Right ventricle myocardium superior (tissue), 1 donor: ENCODE measurements at regions of chr7 and their contacts with region 1.

Region 1: DNA sequence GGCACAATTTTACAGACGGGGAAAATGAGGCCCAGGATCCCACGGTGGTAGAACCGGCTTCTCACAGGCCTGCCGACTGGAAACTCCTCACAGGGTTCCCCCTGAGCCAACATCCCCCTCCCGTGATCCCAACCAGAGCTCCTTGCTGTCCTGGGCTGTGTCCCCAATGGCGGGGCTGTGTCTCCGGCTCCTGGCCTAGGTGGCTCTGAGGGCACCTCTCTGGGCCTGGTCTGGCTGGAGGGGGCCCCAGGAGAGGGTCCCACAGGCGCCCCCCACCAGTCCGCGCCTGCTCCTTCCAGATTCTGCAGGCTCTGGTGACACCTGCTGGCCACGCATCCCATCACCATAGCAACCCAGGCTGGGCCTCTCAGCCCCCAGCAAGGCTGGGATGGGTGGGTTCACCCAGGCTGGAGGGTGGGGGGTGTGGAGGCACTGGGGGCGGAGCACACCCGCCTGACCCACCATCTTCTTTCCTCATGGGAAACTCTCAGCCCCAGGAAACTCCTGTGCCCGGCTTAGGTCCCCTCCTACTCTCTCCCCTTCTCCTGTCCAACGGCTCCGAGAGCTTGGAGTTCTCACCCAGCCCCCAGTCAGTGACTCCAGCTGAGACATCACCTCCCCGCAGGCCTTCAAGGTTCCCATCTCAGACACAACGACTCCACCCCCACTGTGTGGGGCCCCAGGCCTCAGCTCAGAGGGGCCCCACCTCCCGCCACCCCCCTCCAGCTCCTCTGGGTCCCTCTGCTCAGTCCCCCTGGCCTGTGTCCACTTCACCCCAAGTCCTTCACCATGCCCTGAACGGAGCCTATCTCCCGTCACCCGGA is 27.1 kb upstream of the TNRC18 start:
- DNase-seq: peak; percentile 75
- ATAC-seq: peak; percentile 87

Region 2: DNA sequence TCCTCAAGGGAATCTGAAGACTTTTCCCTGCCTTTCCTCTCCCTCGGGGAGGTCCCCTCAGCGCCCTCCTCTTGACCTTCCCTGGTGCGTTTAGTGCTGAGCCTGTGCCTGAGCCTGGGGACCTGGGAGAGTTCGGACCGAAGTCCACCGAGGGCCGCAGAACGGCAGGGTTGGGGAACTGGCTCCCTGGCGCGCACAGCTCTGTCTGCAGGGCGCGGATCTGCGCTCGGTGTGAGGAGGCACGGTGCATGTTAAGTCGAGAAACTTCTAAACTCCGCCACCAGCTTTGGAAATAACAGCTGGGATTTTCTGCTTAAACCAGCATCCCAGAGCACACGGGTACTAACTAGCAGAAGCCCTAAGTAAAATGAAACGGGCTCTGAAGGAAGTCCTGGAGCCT is 212.3 kb before region 1 on chr7:
- intact Hi-C with region 1: loop called (anchors 2 kb)
- DNase-seq: no peak
- ATAC-seq: no peak

Region 3: GRCh38 chr7:5367661-5368060 is 83.1 kb before region 1 on chr7:
- intact Hi-C with region 1: loop called (anchors 5 kb)
- DNase-seq: no peak
- ATAC-seq: no peak